Ascending aorta (tissue), 2 donors: ENCODE measurements at regions of chr11 and their contacts with region 1.

Region 1: DNA sequence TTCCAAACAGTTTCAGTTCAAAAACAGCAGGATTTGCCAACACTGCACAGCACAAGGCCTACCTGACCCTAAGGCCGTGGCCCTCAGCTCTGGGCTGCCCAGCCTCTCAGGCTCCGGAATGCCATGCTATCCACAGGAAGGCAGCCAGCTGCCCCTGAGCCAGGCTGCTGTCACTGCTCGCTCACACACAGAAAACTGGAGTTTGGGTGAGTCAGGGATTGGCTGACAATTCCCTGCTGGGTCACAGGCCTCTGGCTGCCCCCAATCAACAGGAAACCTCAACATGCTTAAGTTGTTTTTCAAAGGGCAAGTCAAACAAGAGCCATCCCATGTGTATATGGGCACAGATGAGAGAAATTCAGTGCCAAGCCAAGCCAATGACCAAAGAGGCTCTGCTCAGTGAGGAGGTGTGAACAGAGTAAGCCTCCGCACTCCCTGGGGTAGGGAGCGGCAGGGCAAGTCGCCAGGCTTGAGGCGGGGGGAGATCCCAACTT is 50.2 kb downstream of the RPL27A start:
- DNase-seq: peak; percentile 70 to 96
- H3K4me3 ChIP-seq: no peak overlapping the region
- H3K27ac ChIP-seq: peak overlapping the region; percentile 75 to 79
- H3K4me1 ChIP-seq: peaks cover 22 to 48% of the 10 kb centered on the region in 2 donors
- H3K27me3 ChIP-seq: no peaks in the 10 kb centered on the region
- CTCF ChIP-seq: no peak

Region 2: DNA sequence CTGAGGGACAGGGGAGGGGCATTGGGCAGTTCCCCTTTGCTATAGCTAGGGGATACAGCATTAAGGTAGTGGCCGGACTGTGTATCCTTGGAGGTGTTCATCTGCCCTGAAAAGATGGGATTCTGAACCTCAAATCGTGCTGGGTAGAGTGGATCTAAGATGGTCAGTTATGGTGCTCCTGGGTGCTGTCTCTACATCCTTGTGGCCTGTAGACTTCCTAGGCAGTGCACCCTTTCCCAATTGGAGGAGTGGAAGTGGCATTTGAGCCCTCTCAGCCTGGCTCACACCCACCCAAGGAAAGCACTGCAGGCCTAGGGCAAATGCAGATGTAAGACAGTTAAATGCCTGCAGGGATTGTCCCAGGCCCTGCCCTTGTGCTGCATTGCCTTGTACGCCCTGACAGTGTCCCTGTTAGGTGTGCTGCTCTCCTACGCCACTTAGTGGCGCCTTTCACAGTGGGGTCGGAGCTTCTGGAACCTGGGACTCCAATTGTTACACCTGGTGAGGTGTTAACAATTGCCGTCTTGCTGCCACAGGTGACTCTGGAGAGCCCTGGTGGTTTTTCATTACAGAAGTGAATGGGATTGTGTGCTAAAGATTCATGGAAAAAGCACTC is 1184.0 kb before region 1 on chr11:
- intact Hi-C with region 1: no loop called
- DNase-seq: no peak
- H3K4me3 ChIP-seq: no peak overlapping the region
- H3K27ac ChIP-seq: no peak overlapping the region
- H3K4me1 ChIP-seq: no peaks in the 10 kb centered on the region
- H3K27me3 ChIP-seq: no peaks in the 10 kb centered on the region
- CTCF ChIP-seq: no peak

Region 3: GRCh38 chr11:8477680-8478079 is 255.1 kb before region 1 on chr11:
- intact Hi-C with region 1: no loop called
- DNase-seq: no peak
- H3K4me3 ChIP-seq: no peak overlapping the region
- H3K27ac ChIP-seq: no peak overlapping the region
- H3K4me1 ChIP-seq: no peaks in the 10 kb centered on the region
- H3K27me3 ChIP-seq: no peaks in the 10 kb centered on the region
- CTCF ChIP-seq: no peak

Region 4: GRCh38 chr11:8584511-8584910 is 148.3 kb before region 1 on chr11:
- intact Hi-C with region 1: no loop called
- DNase-seq: no peak
- H3K4me3 ChIP-seq: no peak overlapping the region
- H3K27ac ChIP-seq: no peak overlapping the region
- H3K4me1 ChIP-seq: no peaks in the 10 kb centered on the region
- H3K27me3 ChIP-seq: no peaks in the 10 kb centered on the region
- CTCF ChIP-seq: no peak

Region 5: DNA sequence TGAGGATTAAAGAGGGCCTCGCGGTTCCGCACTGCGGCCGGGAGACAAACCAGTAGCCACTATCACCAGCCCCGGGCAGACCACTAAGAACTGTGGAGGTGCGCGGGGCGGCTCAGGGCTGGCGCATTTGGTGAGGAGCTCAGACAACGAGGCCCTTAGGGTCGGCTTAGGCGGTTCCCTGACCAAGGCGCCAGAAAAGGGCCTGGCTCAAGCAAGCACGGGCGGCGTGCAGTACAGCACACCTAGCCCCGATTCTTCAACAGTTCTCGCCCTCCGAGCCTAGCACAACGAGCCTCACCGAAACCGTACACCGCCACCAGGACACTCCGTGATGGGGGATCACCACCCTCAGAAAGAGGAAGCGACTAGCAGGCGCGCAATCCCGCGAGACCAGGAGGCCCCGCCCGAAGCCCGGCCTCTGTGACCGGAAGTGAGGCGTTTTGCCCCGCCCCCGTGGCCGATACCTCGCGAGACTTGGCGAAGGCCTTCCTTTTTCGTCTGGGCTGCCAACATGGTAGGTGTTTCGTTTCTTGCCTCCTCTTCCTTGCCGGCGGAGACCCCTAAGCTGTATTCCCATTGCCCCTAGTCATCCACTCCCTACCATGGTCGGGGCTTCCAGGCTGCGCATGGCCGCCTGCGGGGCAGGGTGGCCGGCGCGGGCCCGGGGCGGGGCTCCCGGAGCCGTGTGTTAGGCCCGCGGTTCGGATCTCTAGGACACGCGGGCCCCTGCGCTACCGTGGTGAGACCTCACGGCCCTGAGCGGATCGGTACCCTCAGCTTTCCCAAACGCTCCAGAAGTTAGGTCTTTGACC is 50.3 kb before region 1 on chr11 and contains the starts of genes RPL27A and TRIM66:
- intact Hi-C with region 1: loop called (anchors 2 kb)
- DNase-seq: peak; percentile 91 to 99
- H3K4me3 ChIP-seq: peak within 1 kb of the TSS; percentile 65 to 86
- H3K27ac ChIP-seq: peak within 1 kb of the TSS; percentile 81 to 97
- H3K4me1 ChIP-seq: peaks cover 0 to 16% of the 10 kb centered on the region in 2 donors
- H3K27me3 ChIP-seq: no peaks in the 10 kb centered on the region
- CTCF ChIP-seq: peak in 2 of 3 experiments; percentile 8 to 11
- total RNA-seq, gene RPL27A: 789 TPM
- total RNA-seq, gene TRIM66: 3.9 TPM

Region 6: DNA sequence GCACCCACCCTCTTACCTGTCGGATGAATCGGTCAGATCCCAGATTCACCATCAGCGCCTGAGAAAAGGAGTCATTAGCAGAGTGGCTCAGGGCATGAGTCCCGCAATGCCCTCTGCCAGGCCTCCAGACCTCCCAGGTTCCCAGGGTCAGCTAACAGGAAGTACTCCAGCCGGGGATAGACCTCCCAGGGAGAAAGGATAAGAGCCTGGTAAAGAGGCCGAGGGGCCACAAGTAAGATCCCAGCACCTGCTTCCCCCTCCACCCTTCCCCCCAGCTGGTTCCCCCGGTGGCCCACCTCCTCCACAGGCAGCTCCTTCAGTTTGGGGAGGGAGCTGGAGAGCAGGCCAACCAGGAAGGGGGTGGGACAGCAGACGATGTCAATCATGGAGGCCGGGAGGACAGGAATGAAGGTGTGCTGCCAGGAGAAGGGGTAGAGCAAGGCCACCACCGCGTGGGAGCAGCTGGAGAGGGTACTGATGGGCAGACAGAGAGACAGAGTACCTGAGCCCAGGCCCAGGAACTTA is 33.8 kb before region 1 on chr11:
- intact Hi-C with region 1: no loop called
- DNase-seq: no peak
- H3K4me3 ChIP-seq: no peak overlapping the region
- H3K27ac ChIP-seq: peak overlapping the region; percentile 76 to 77
- H3K4me1 ChIP-seq: peaks cover 0 to 12% of the 10 kb centered on the region in 2 donors
- H3K27me3 ChIP-seq: no peaks in the 10 kb centered on the region
- CTCF ChIP-seq: no peak

Region 7: DNA sequence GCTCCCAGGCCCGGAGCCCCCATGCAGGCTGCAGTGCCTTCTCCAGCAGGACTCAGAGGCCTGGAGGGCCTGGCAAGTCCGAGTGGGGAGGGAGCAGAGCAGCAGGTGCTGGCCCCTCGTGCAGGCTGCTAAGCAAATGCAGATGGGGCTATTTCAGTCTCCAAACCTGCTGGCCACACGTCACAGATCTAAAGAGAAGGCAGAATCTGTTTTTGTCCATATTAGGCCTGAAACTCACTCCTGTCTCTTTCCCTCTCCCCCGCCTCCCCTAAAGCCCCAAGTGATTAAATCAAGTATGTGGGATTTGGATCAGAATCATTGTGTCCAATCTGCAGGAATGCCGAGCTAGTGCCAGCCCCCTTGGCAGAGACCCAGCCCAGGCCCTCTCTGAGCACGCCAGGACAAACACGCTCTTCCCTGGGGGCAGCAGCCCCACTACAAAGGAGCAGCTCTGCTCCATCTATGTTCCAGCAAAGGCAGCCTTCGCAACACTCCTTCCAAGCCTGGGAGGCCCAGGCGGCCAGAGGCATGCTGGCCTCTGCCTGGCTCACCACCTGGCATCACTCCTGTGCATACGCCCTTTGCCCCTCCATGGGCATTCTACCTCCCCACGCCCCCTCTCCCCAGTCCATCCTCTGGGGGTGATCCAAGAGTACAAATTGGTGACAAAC is 23.7 kb before region 1 on chr11:
- intact Hi-C with region 1: loop called (anchors 1 kb)
- DNase-seq: peak; percentile 70 to 98
- H3K4me3 ChIP-seq: no peak overlapping the region
- H3K27ac ChIP-seq: peak overlapping the region; percentile 89 to 99
- H3K4me1 ChIP-seq: peaks cover 17 to 32% of the 10 kb centered on the region in 2 donors
- H3K27me3 ChIP-seq: no peaks in the 10 kb centered on the region
- CTCF ChIP-seq: no peak

Region 8: DNA sequence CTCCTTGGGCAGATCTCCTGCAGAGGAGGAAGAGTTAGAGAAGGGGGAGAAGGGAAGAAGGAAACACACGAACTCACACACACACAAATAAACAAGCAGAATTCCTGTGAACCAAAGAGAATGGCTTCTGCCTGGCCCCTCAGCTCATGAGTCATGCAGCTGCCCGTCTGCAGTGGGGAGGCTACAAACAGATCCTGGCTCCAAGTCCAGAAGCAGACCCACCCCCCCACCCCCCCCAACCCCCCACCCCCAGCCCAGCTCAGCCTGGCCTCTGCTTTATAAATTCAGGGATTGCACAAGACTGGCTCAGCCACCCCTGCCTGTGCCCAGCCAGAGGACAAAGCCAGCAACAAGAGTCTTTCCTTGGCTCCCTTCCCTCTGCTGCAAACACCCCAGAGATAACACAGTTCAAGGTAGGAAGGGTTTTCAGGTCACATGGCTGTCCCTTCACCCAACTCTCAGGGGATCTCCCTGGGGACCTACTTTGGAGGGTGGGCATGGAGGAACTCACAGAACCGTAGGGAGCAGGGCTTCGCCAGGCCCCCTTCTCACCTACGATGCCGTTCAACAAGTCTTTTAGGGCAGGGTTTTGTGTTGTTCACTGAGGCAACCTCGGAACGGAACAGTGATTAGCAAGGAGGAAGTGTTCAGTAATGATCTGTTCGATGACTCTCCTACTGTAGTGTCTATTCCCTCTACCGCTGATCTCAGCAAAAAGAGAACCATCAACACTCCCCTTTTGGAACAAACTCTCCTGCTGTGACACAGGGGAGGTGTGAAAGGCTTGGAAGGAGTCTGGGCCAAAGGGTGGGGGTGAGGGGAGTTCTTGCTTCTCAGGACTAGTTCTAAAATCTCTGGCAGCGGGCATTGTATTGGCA is 14.7 kb before region 1 on chr11:
- intact Hi-C with region 1: loop called (anchors 1 kb)
- DNase-seq: peak in 1 of 2 donors; percentile 83
- H3K4me3 ChIP-seq: no peak overlapping the region
- H3K27ac ChIP-seq: peak overlapping the region; percentile 89 to 91
- H3K4me1 ChIP-seq: peaks cover 24 to 78% of the 10 kb centered on the region in 2 donors
- H3K27me3 ChIP-seq: no peaks in the 10 kb centered on the region
- CTCF ChIP-seq: no peak

Region 9: DNA sequence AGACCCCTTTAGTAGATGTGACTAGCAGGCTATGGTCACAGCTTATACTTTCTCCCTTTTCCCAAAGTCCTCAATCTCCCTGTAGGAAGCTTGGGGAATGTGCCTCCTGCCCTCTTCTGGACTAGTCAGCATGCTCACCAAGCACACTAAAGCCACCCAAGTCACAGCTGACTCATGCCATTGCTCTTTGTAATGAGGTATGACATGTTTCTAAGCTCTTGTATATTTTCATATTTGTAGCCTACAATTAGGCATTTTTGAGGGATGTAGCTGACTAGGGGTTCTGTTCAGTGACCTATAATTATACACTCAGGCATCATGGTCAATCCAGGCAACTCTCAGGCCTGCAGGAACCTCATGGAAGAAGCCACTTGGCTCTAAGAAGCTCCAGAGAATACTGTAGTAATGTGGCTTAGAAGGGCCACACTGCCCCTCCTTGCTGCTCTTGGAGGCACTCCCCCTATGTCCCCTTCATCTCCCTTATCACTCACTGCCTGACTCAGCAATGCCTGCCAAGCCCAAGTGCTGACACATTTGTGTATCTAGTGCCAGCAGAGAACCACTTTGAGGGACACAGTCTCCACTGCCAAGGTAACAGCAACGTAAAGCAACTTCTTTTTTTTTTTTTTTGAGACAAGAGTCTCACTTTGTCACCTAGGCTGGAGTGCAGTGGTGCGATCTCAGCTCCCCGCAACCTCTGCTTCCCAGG is 36.0 kb after region 1 on chr11:
- intact Hi-C with region 1: loop called (anchors 2 kb)
- DNase-seq: peak; percentile 23 to 82
- H3K4me3 ChIP-seq: no peak overlapping the region
- H3K27ac ChIP-seq: peak overlapping the region; percentile 61 to 80
- H3K4me1 ChIP-seq: peaks cover 18 to 65% of the 10 kb centered on the region in 2 donors
- H3K27me3 ChIP-seq: no peaks in the 10 kb centered on the region
- CTCF ChIP-seq: peak in 2 of 3 experiments; percentile 39 to 54